GM12878 (cell line): ENCODE measurements at regions of chr3 and their contacts with region 1.

Region 1: GRCh38 chr3:12891985-12892839 is 50.8 kb upstream of the RPL32 start:
- DNase-seq: no peak
- ATAC-seq: peak; percentile 26
- H3K4me3 ChIP-seq: no peak overlapping the region
- H3K27ac ChIP-seq: no peak overlapping the region
- H3K4me1 ChIP-seq: peaks cover 19% of the 10 kb centered on the region
- H3K27me3 ChIP-seq: no peaks in the 10 kb centered on the region
- CTCF ChIP-seq: peak; percentile 82 to 97 (median 95)
- EP300 ChIP-seq: no peak
- POLR2A ChIP-seq: no peak
- RAD21 ChIP-seq: peak; percentile 98

Region 2: DNA sequence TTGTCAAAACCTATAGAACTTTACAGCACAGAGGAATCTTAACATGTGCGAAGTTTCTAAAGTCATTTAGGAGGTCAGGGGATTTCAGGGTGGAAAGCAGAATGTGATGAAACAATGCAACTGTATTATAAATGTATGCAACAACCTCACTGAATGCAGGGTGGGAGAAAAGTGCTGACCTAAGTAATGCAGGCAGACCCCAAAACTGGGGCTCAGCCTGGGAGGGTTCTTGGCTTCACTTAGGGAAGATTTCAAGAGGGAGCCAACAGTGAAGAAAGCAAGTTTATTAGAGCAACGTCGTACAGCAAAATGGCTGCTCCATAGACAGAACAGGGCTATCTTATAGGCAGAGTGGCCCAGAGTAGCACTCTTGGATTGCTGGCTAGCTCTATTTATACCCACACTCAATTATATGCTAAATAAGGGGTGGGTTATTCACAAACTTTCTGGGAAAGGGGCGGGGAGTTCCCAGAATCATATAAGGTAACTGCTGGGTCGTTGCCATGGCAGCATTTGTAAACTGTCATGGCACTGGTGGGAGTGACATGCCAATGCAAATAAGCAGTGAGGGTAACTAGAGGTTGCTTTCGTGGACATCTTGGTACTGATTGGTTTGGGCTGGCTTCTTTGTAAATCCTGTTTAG is 109.9 kb before region 1 on chr3:
- CTCF ChIA-PET with region 1: interaction called, 17 read pairs
- POLR2A ChIA-PET with region 1: no interaction called
- RAD21 ChIA-PET with region 1: interaction called, 5 read pairs
- SMC1A ChIA-PET with region 1: interaction called, 6 read pairs
- in situ Hi-C with region 1: no loop called
- intact Hi-C with region 1: no loop called
- DNase-seq: no peak
- ATAC-seq: peak; percentile 36; the same call in 1 of the 3 replicates
- H3K4me3 ChIP-seq: no peak overlapping the region
- H3K27ac ChIP-seq: no peak overlapping the region
- H3K4me1 ChIP-seq: no peaks in the 10 kb centered on the region
- H3K27me3 ChIP-seq: peaks cover 2 to 4% of the 10 kb centered on the region in 2 experiments; a peak in 2 of 4 replicates
- CTCF ChIP-seq: no peak
- EP300 ChIP-seq: no peak
- POLR2A ChIP-seq: no peak
- RAD21 ChIP-seq: no peak

Region 3: GRCh38 chr3:12822725-12823373 is 69.4 kb before region 1 on chr3:
- CTCF ChIA-PET with region 1: interaction called, 7 read pairs
- POLR2A ChIA-PET with region 1: no interaction called
- RAD21 ChIA-PET with region 1: interaction called, 10 read pairs
- SMC1A ChIA-PET with region 1: interaction called, 3 read pairs
- in situ Hi-C with region 1: no loop called
- intact Hi-C with region 1: loop called (anchors 2 kb)
- DNase-seq: no peak
- ATAC-seq: peak; percentile 85
- H3K4me3 ChIP-seq: no peak overlapping the region
- H3K27ac ChIP-seq: no peak overlapping the region
- H3K4me1 ChIP-seq: no peaks in the 10 kb centered on the region
- H3K27me3 ChIP-seq: no peaks in the 10 kb centered on the region
- CTCF ChIP-seq: peak; percentile 39 to 46 (median 46); a peak in 5 of 6 replicates
- EP300 ChIP-seq: no peak
- POLR2A ChIP-seq: no peak
- RAD21 ChIP-seq: 0 out of 2 replicates have a peak, but pooled peaks have one; percentile 6

Region 4: GRCh38 chr3:12868039-12869034 is 23.9 kb before region 1 on chr3:
- CTCF ChIA-PET with region 1: interaction called, 271 read pairs
- POLR2A ChIA-PET with region 1: interaction called, 7 read pairs
- RAD21 ChIA-PET with region 1: interaction called, 19 read pairs
- SMC1A ChIA-PET with region 1: interaction called, 103 read pairs
- in situ Hi-C with region 1: no loop called
- intact Hi-C with region 1: loop called (anchors 1 kb)
- DNase-seq: no peak
- ATAC-seq: peak; percentile 82
- H3K4me3 ChIP-seq: no peak overlapping the region
- H3K27ac ChIP-seq: no peak overlapping the region
- H3K4me1 ChIP-seq: peaks cover 28% of the 10 kb centered on the region
- H3K27me3 ChIP-seq: no peaks in the 10 kb centered on the region; a peak in 1 of 4 replicates
- CTCF ChIP-seq: peak; percentile 86 to 94 (median 90)
- EP300 ChIP-seq: no peak
- POLR2A ChIP-seq: no peak
- RAD21 ChIP-seq: peak; percentile 85

Region 5: GRCh38 chr3:13105896-13106250 is 213.7 kb after region 1 on chr3:
- CTCF ChIA-PET with region 1: no interaction called
- POLR2A ChIA-PET with region 1: no interaction called
- RAD21 ChIA-PET with region 1: no interaction called
- SMC1A ChIA-PET with region 1: no interaction called
- in situ Hi-C with region 1: no loop called
- intact Hi-C with region 1: no loop called
- DNase-seq: no peak
- ATAC-seq: no peak
- H3K4me3 ChIP-seq: no peak overlapping the region
- H3K27ac ChIP-seq: no peak overlapping the region
- H3K4me1 ChIP-seq: peaks cover 7% of the 10 kb centered on the region
- H3K27me3 ChIP-seq: no peaks in the 10 kb centered on the region
- CTCF ChIP-seq: no peak
- EP300 ChIP-seq: no peak
- POLR2A ChIP-seq: no peak
- RAD21 ChIP-seq: no peak